Heart left ventricle (tissue), 16 donors: ENCODE measurements at regions of chr5 and their contacts with region 1.

Region 1: DNA sequence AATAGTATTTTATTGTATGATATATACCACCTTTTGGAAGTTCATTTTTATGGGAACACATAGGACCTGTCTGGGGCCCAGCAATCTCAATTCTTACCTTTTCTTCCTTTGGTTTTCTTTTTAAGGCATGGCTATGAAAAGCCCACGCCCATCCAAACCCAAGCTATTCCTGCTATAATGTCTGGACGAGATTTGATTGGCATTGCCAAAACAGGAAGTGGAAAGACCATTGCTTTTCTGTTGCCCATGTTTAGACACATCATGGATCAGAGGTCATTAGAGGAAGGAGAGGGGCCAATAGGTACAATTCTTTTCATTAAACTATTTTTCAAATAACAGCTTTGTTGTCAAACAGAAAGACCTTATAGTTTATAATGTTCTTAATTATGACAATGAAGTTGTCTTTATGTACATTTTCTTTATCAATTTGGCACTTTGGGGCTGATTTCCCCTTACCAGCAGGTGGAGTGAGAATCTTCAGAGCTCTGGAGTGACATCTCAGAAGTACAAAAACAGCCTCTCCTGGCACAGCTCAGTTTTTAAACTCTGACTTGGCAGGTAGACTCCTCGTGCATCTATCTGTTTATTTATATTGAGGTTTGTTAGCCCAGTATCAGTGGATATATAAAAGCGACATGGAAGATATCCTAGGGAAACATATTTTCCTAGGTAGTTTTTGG is 25.8 kb downstream of the DDX46 start:
- DNase-seq: no peak
- ATAC-seq: no peak
- H3K4me3 ChIP-seq: no peak overlapping the region
- H3K27ac ChIP-seq: no peak overlapping the region
- H3K4me1 ChIP-seq: no peaks in the 10 kb centered on the region
- H3K27me3 ChIP-seq: no peaks in the 10 kb centered on the region
- CTCF ChIP-seq: peak in 1 of 12 donors; percentile 8
- POLR2A ChIP-seq: no peak

Region 2: GRCh38 chr5:134692722-134693121 is 91.7 kb before region 1 on chr5:
- intact Hi-C with region 1: loop called in 2 of 10 experiments (anchors 10 kb)
- DNase-seq: no peak
- ATAC-seq: no peak
- H3K4me3 ChIP-seq: no peak overlapping the region
- H3K27ac ChIP-seq: no peak overlapping the region
- H3K4me1 ChIP-seq: no peaks in the 10 kb centered on the region
- H3K27me3 ChIP-seq: no peaks in the 10 kb centered on the region
- CTCF ChIP-seq: no peak
- POLR2A ChIP-seq: no peak

Region 3: DNA sequence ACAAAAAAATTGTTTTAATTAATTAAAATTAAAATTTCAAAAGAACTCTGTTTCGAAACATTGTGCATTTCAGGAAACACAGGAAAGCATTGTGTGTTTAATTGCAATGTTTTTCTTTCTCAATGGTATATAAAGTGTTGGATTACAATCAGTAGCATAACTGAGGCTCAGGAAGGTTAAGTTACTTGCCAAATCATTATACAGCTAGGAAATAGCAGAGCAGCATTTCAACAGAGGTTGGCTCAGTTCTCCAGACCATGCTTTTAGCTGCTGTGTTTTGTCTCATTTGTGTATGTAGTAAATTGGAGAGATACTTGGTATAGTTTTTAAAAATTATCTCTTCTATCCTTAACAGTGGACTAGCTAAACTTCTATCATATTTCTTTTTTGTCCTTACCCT is 76.1 kb before region 1 on chr5:
- intact Hi-C with region 1: loop called in 2 of 10 experiments (anchors 10 kb)
- DNase-seq: no peak
- ATAC-seq: no peak
- H3K4me3 ChIP-seq: no peak overlapping the region
- H3K27ac ChIP-seq: no peak overlapping the region
- H3K4me1 ChIP-seq: no peaks in the 10 kb centered on the region
- H3K27me3 ChIP-seq: no peaks in the 10 kb centered on the region
- CTCF ChIP-seq: no peak
- POLR2A ChIP-seq: no peak